Activated CD8-positive, alpha-beta memory T cell treated with anti-CD3 and anti-CD28 coated beads, Interleukin-2, amount 10 ng/mL, durations not matched to agents 7 days and 5 days (primary cell): ENCODE measurements at regions of chr17 and their contacts with region 1.

Region 1: DNA sequence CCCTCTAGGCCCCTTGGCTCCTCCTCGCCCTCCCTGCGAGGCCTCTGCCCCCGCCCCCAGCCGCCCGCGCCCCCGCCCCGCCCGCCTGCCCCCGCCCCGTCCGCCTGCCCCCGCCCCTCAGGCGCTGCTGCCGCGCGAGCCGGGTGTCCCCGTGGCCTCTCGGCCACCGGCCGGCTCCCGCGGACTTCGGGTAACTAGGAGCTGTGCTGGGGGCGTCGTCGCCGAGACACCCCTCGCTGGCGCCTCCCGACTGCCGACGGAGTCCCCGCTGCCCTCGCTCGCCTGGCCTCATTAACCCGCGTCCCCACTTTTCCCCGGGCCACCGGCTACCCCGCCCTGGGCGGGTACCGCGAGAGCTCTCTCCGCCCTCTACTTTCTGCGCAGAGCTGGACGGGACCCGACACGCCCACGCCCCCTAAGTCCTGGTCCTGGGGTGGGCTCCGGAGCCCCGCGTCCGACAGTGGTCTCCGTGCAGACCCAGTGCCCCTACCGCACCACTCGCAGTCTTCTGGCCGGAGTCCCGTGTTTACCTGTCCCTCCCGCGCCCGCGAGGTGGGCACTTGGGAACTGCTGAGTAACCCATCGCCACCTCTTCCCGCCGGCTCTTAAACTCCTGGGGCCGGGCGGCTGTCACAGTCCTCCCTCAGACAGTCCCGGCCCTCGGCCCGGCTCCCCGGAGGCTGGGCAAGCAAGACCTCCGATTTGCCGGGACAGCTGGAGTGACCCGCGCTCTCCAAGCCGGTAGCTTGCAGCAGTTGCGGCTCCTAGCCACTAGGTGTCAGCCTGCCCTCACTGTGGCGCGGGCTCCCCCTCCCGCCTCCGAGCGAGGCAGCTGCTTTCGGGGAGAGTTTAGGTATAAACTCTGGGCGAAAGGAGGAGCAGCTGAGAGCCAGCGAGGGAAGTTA is at the start of gene TLCD1:
- DNase-seq: peak; percentile 96
- ATAC-seq: peak; percentile 65
- H3K4me3 Mint-ChIP-seq: peak within 1 kb of the TSS; percentile 91
- H3K27ac Mint-ChIP-seq: peak within 1 kb of the TSS; percentile 94
- H3K4me1 Mint-ChIP-seq: peaks cover 51% of the 10 kb centered on the region
- H3K27me3 Mint-ChIP-seq: no peaks in the 10 kb centered on the region
- total RNA-seq, gene TLCD1: 3.2 to 5.6 TPM

Region 2: GRCh38 chr17:28484296-28484695 is 242.2 kb before region 1 on chr17:
- CTCF ChIA-PET with region 1: no interaction called
- DNase-seq: peak; percentile 50
- ATAC-seq: peak; percentile 80
- H3K4me3 Mint-ChIP-seq: no peak overlapping the region
- H3K27ac Mint-ChIP-seq: peak overlapping the region; percentile 10
- H3K4me1 Mint-ChIP-seq: peaks cover 17% of the 10 kb centered on the region
- H3K27me3 Mint-ChIP-seq: peaks cover 4% of the 10 kb centered on the region

Region 3: GRCh38 chr17:28661635-28662537 is 64.6 kb before region 1 on chr17 and contains the starts of genes SDF2 and SUPT6H:
- CTCF ChIA-PET with region 1: interaction called, 12 read pairs
- DNase-seq: peak; percentile 95
- ATAC-seq: peak; percentile 90
- H3K4me3 Mint-ChIP-seq: peak within 1 kb of the TSS; percentile 97
- H3K27ac Mint-ChIP-seq: peak within 1 kb of the TSS; percentile 99
- H3K4me1 Mint-ChIP-seq: peaks cover 48% of the 10 kb centered on the region
- H3K27me3 Mint-ChIP-seq: no peaks in the 10 kb centered on the region
- total RNA-seq, gene SDF2: 45.9 to 48.9 TPM
- total RNA-seq, gene SUPT6H: 64.7 to 81.2 TPM

Region 4: DNA sequence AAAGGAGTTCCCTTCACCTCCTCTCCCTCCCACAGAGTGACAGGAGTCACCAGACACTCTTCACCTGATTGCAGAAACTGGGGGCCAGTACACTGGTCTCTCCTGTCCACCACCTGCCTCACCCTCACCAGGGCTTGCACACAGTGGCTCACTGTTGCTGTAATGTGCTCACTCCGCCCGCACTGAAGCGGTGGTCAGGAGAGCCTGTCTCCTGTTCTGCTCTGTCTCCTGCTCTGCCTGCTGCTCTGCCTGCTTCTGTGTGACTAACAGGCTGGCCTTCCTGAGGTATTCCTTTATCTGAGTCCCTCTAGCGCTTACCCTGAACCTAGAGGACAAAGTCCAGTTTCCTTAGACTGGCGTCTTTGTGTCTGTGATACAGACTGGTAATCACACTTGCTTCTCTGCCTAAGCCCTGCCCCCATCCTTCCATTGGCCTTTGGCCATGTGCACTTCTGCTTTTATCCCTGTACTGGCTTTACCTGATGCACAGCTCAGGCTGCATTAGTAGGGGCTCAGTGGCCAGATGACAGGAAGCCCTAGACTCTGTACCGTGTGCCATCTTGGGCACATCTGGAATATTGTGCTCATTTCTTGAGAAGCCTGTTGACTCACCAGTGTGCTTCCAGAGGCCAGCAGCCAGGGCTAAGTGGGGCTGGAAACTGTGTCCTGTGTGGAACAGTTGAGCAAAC is 28.1 kb before region 1 on chr17:
- CTCF ChIA-PET with region 1: no interaction called
- DNase-seq: no peak
- ATAC-seq: no peak
- H3K4me3 Mint-ChIP-seq: no peak overlapping the region
- H3K27ac Mint-ChIP-seq: no peak overlapping the region
- H3K4me1 Mint-ChIP-seq: no peaks in the 10 kb centered on the region
- H3K27me3 Mint-ChIP-seq: no peaks in the 10 kb centered on the region

Region 5: GRCh38 chr17:28763804-28764266 is 37.4 kb after region 1 on chr17:
- CTCF ChIA-PET with region 1: interaction called, 86 read pairs
- DNase-seq: peak; percentile 86
- ATAC-seq: peak; percentile 70
- H3K4me3 Mint-ChIP-seq: no peak overlapping the region
- H3K27ac Mint-ChIP-seq: peak overlapping the region; percentile 50
- H3K4me1 Mint-ChIP-seq: peaks cover 42% of the 10 kb centered on the region
- H3K27me3 Mint-ChIP-seq: no peaks in the 10 kb centered on the region

Region 6: DNA sequence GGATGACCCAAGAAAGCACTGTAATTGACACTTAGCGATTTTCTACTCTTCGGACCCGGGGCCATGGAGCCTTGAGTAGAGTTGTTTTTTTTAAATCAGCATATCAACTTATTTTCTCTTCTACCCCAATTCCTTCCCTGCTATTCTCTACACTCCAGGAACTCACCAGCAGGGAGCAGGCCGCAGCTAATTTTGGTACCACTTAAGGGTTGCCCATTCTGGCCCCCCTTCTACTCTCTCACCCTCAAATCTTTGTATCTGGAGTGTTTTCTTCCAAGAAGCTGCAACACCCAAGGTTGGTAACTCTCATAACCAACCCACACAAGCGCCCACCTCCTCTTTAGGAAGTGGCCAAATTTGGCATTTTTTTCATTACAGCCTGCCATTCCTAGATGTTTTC is 122.8 kb after region 1 on chr17:
- CTCF ChIA-PET with region 1: interaction called, 17 read pairs
- DNase-seq: no peak
- ATAC-seq: peak; percentile 38
- H3K4me3 Mint-ChIP-seq: no peak overlapping the region
- H3K27ac Mint-ChIP-seq: no peak overlapping the region
- H3K4me1 Mint-ChIP-seq: peaks cover 9% of the 10 kb centered on the region
- H3K27me3 Mint-ChIP-seq: no peaks in the 10 kb centered on the region

Region 7: GRCh38 chr17:28896884-28897768 is 170.6 kb after region 1 on chr17 and contains the start of gene FLOT2:
- CTCF ChIA-PET with region 1: interaction called, 37 read pairs
- DNase-seq: peak; percentile 78
- ATAC-seq: peak; percentile 69
- H3K4me3 Mint-ChIP-seq: peak within 1 kb of the TSS; percentile 91
- H3K27ac Mint-ChIP-seq: peak within 1 kb of the TSS; percentile 93
- H3K4me1 Mint-ChIP-seq: peaks cover 63% of the 10 kb centered on the region
- H3K27me3 Mint-ChIP-seq: no peaks in the 10 kb centered on the region
- total RNA-seq, gene FLOT2: 143 to 191 TPM

Region 8: DNA sequence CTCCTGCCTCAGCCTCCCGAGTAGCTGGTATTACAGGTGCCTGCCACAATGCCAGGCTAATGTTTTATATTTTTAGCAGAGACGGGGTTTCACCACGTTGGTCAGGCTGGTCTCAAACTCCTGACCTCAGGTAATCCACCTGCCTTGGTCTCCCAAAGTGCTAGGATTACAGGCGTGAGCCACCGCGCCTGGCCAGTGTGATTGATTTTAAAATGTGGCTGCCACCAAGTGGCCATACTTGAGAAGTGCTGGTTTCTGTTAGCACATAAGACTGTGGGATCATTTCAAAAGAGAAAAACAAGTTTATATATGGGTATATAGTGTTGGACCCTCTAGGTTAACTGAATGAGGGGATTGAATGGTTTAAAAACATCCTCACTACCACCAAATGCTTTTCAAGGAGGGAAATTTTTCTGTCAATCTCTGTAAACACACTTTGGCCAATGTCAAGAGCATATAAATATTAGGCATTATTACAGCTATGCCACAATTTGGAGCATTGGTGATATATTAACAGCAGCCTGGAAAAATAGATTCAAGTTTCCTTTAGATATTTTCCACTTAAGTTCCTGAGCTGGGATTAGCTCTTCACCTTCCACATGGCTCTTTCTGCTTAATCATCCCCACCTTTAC is 189.9 kb after region 1 on chr17:
- CTCF ChIA-PET with region 1: interaction called, 20 read pairs
- DNase-seq: peak; percentile 64
- ATAC-seq: peak; percentile 65
- H3K4me3 Mint-ChIP-seq: no peak overlapping the region
- H3K27ac Mint-ChIP-seq: peak overlapping the region; percentile 52
- H3K4me1 Mint-ChIP-seq: peaks cover 8% of the 10 kb centered on the region
- H3K27me3 Mint-ChIP-seq: no peaks in the 10 kb centered on the region

Region 9: GRCh38 chr17:29111816-29112499 is 385.5 kb after region 1 on chr17:
- CTCF ChIA-PET with region 1: interaction called, 22 read pairs
- DNase-seq: peak; percentile 78
- ATAC-seq: peak; percentile 74
- H3K4me3 Mint-ChIP-seq: no peak overlapping the region
- H3K27ac Mint-ChIP-seq: no peak overlapping the region
- H3K4me1 Mint-ChIP-seq: peaks cover 9% of the 10 kb centered on the region
- H3K27me3 Mint-ChIP-seq: no peaks in the 10 kb centered on the region